ENCODE measurements at regions of chr5 and their contacts with region 1.

Region 1: GRCh38 chr5:138352071-138352721 is at the start of gene KDM3B:
- DNase-seq: peak; percentile 86
- H3K4me3 Mint-ChIP-seq: peak within 1 kb of the TSS; percentile 99
- H3K27ac Mint-ChIP-seq: peak within 1 kb of the TSS; percentile 98
- H3K4me1 Mint-ChIP-seq: peaks cover 51% of the 10 kb centered on the region
- H3K27me3 Mint-ChIP-seq: no peaks in the 10 kb centered on the region
- CTCF ChIP-seq: peak; percentile 100
- total RNA-seq, gene KDM3B: 57.8 and 59.0 TPM in 2 replicates

Region 2: DNA sequence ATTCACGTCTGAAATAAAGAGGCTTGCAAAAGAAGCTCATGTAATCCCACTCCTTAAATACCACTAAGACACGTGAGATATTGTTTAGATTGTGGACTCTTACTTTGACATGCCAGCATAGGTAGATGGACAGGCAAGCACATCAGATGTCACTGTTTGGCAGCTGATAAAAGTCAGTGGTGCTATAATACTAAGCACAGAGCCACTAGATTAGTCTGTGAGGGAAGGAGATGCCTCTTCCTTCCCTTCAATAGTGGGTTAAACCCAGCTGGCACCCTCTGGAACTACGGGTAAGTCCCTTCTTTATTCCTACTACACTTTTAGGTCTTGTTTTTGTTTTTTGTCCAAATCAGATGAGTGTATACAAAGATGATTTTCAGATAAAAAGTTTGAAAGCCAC is 484.5 kb before region 1 on chr5 and contains the start of gene MYOT:
- CTCF ChIA-PET with region 1: no interaction called
- POLR2A ChIA-PET with region 1: no interaction called
- intact Hi-C with region 1: no loop called
- DNase-seq: no peak
- H3K4me3 Mint-ChIP-seq: no peak within 1 kb of the TSS
- H3K27ac Mint-ChIP-seq: no peak within 1 kb of the TSS
- H3K4me1 Mint-ChIP-seq: no peaks in the 10 kb centered on the region
- H3K27me3 Mint-ChIP-seq: no peaks in the 10 kb centered on the region
- CTCF ChIP-seq: no peak
- total RNA-seq, gene MYOT: not detected in 2 replicates

Region 3: DNA sequence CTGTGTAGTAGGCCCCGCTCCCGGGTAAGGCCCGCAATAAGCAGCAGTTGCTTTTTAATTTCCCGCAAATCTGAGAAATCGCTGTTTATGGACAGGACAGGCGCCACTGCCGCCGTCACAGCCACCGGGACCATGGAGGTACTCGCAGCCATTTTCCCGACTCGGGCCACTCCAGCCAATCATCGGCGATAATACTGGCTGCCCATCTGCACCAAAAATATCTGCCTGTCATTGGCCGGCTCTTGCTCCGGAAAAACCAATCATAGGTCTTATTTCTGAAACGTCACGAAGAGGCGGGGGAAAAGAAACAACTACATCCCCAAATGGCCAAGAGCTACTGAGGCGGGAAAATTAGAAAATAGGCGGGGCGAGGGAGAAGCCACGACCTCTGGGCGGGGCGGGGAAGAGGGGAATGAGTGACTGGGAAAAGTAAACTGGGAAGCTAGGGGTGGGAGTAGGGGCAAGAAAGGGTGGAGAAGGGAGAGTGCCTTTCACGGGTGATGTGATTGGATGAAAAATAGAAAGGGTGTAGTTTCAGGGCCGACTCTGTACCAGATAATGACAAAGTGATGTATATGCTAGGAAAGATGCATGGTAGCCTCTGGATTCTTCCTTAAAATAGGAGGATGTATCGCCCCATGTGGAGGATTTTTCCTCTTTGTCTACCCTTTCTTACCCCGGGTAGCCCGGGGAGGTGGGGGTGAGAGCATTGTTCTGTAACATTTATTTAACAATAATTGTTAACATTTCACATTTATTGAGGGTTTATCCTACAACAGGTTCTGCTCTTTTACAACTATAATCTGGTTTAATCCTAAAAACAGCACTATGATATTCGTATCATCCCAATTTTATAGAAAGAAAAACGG is 138.8 kb before region 1 on chr5 and contains the start of gene CDC23:
- CTCF ChIA-PET with region 1: interaction called, 106 read pairs
- POLR2A ChIA-PET with region 1: interaction called, 60 read pairs
- intact Hi-C with region 1: no loop called
- DNase-seq: peak; percentile 100
- H3K4me3 Mint-ChIP-seq: peak within 1 kb of the TSS; percentile 98
- H3K27ac Mint-ChIP-seq: peak within 1 kb of the TSS; percentile 99
- H3K4me1 Mint-ChIP-seq: peaks cover 18% of the 10 kb centered on the region
- H3K27me3 Mint-ChIP-seq: no peaks in the 10 kb centered on the region
- CTCF ChIP-seq: no peak
- total RNA-seq, gene CDC23: 49.7 and 67.1 TPM in 2 replicates

Region 4: DNA sequence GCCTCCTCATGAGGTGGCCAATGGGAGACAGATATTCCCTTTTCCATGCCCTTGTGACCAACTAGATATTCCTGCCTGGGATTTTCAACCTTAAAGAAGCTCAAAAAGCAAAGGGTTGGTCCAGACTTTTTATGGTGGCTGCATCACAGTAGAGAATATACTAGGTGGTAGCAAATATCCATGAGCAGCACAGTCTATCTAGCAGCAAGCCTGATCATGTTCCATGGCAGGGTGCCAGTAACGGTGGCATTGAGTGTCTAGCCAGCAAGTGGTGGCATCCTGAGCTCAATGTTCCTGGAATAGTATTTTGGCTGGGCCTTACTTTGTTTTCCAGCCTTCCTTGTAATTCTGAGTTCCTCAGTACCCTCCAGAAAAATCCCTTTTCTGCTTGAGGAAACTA is 46.4 kb before region 1 on chr5:
- CTCF ChIA-PET with region 1: interaction called, 17 read pairs
- POLR2A ChIA-PET with region 1: interaction called, 13 read pairs
- intact Hi-C with region 1: no loop called
- DNase-seq: peak; percentile 79
- H3K4me3 Mint-ChIP-seq: no peak overlapping the region
- H3K27ac Mint-ChIP-seq: peak overlapping the region; percentile 57
- H3K4me1 Mint-ChIP-seq: peaks cover 8% of the 10 kb centered on the region
- H3K27me3 Mint-ChIP-seq: no peaks in the 10 kb centered on the region
- CTCF ChIP-seq: no peak

Region 5: GRCh38 chr5:138337685-138338410 is 14.3 kb before region 1 on chr5 and contains the start of gene FAM53C:
- CTCF ChIA-PET with region 1: interaction called, 323 read pairs
- POLR2A ChIA-PET with region 1: interaction called, 395 read pairs
- intact Hi-C with region 1: loop called (anchors 1 kb)
- DNase-seq: peak; percentile 97
- H3K4me3 Mint-ChIP-seq: peak within 1 kb of the TSS; percentile 88
- H3K27ac Mint-ChIP-seq: peak within 1 kb of the TSS; percentile 100
- H3K4me1 Mint-ChIP-seq: peaks cover 48% of the 10 kb centered on the region
- H3K27me3 Mint-ChIP-seq: no peaks in the 10 kb centered on the region
- CTCF ChIP-seq: no peak
- total RNA-seq, gene FAM53C: 37.2 and 38.9 TPM in 2 replicates

Region 6: DNA sequence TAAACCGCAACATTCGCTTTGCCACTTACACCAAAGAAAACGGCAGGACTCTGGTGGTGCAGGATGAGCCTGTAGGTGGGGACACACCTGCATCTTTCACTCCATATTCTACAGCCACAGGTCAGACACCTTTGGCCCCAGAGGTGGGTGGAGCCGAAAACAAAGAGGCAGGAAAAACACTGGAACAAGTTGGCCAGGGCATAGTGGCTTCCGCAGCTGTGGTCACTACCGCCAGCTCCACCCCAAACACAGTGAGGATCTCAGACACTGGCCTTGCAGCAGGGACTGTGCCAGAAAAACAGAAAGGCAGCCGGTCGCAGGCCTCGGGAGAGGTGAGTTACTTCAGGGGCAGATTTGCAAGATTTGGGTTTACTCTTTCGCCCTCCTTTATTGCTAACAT is 34.1 kb after region 1 on chr5:
- CTCF ChIA-PET with region 1: interaction called, 47 read pairs
- POLR2A ChIA-PET with region 1: interaction called, 22 read pairs
- intact Hi-C with region 1: no loop called
- DNase-seq: no peak
- H3K4me3 Mint-ChIP-seq: no peak overlapping the region
- H3K27ac Mint-ChIP-seq: no peak overlapping the region
- H3K4me1 Mint-ChIP-seq: peaks cover 11% of the 10 kb centered on the region
- H3K27me3 Mint-ChIP-seq: no peaks in the 10 kb centered on the region
- CTCF ChIP-seq: no peak

Region 7: GRCh38 chr5:138418444-138418843 is 66.2 kb after region 1 on chr5:
- CTCF ChIA-PET with region 1: interaction called, 11 read pairs
- POLR2A ChIA-PET with region 1: no interaction called
- intact Hi-C with region 1: no loop called
- DNase-seq: no peak
- H3K4me3 Mint-ChIP-seq: no peak overlapping the region
- H3K27ac Mint-ChIP-seq: no peak overlapping the region
- H3K4me1 Mint-ChIP-seq: peaks cover 6% of the 10 kb centered on the region
- H3K27me3 Mint-ChIP-seq: no peaks in the 10 kb centered on the region
- CTCF ChIP-seq: no peak

Region 8: DNA sequence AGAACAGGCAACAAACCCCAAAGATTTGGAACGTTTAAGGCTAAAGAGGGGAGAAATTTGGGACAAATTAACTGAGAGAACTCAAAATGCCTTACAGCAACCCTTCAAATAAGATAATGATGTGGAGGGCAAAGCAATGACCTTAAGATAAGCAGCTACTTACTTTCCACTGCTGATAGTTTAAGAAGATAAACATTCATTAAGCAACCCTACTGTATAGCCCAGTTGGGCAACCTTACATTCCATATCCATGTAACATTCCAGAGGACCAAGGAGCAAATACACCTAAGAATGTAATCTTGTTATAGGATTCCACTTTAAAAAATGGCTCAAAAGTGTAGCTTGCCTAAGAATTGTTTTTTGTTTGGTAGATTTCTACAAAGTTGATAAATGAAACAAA is 176.0 kb after region 1 on chr5:
- CTCF ChIA-PET with region 1: interaction called, 13 read pairs
- POLR2A ChIA-PET with region 1: interaction called, 3 read pairs
- intact Hi-C with region 1: no loop called
- DNase-seq: peak; percentile 41
- H3K4me3 Mint-ChIP-seq: peak overlapping the region; percentile 1
- H3K27ac Mint-ChIP-seq: no peak overlapping the region
- H3K4me1 Mint-ChIP-seq: peaks cover 49% of the 10 kb centered on the region
- H3K27me3 Mint-ChIP-seq: no peaks in the 10 kb centered on the region
- CTCF ChIP-seq: no peak

Measured in MCF 10A (cell line).